HepG2 (cell line): ENCODE measurements at regions of chr1 and their contacts with region 1.

Region 1: GRCh38 chr1:193619911-193620310 is 433.5 kb upstream of the B3GALT2 start:
- DNase-seq: no peak
- ATAC-seq: no peak
- H3K4me3 ChIP-seq: no peak overlapping the region
- H3K27ac ChIP-seq: no peak overlapping the region
- H3K4me1 ChIP-seq: no peaks in the 10 kb centered on the region
- H3K27me3 ChIP-seq: no peaks in the 10 kb centered on the region
- CTCF ChIP-seq: no peak
- EP300 ChIP-seq: no peak
- POLR2A ChIP-seq: no peak
- RAD21 ChIP-seq: no peak

Region 2: DNA sequence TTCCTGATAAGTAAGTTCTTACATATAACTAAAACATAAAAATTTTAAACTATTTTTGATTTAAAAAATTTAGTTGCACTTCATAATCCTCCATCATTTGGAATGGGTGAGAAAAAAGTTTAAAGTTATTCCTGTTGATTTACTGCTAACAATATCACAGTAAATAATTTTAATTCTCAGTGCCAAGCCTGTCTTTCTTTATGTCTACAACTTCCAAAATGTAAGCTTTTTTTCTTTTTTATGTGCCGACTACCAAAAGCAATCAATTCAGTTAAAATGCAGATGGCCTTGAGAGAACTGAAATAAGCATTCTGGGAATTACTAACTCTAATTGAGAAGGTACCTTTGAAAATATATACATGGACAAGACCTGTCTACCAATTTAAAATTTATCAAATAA is 790.8 kb after region 1 on chr1:
- CTCF ChIA-PET with region 1: no interaction called
- POLR2A ChIA-PET with region 1: no interaction called
- in situ Hi-C with region 1: no loop called
- intact Hi-C with region 1: loop called (anchors 5 kb)
- DNase-seq: no peak
- ATAC-seq: no peak
- H3K4me3 ChIP-seq: no peak overlapping the region
- H3K27ac ChIP-seq: no peak overlapping the region
- H3K4me1 ChIP-seq: no peaks in the 10 kb centered on the region
- H3K27me3 ChIP-seq: no peaks in the 10 kb centered on the region
- CTCF ChIP-seq: no peak
- EP300 ChIP-seq: no peak
- POLR2A ChIP-seq: no peak
- RAD21 ChIP-seq: no peak